Activated naive CD4-positive, alpha-beta T cell treated with anti-CD3 and anti-CD28 coated beads for 36 hours (primary cell): ENCODE measurements at regions of chr17 and their contacts with region 1.

Region 1: DNA sequence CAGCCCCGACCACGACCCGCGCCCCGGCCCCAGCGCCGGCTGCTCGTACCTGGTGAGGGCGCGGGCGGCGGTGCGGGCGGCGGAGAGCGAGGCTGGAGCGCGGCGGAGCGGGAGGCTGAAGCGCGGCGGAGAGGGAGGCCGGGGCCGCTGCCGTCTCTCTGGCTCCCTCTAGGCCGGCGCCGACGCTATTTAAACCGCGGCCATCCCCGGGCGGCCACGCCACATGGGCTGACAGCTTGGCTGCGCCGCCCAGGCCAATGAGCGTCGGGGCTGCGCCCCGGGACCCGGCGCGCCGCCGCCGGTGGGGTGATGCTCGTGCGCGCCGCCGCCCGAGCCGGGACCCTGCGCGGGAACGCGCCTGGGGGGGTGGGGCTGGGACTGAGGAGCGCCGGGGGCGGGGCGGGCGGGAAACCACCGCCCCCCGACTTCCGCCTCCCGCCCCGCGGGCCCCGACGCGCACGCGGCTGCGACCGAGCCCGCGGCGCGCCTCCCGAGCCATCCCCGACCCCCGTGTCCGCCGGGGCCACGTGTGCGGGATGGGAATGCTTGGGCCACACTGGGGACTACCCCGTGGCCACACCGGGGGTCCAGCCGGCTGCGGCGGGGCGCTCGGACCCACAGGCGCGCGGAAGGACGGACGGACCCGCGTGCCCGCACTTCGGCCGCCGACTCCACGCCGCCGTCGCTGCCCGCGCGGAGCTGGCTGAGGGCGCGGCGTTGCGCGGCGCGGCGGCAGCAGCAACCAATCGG is at the start of gene FASN:
- DNase-seq: peak; percentile 94
- H3K4me3 Mint-ChIP-seq: peak within 1 kb of the TSS; percentile 75
- H3K27ac Mint-ChIP-seq: peak within 1 kb of the TSS; percentile 63
- H3K4me1 Mint-ChIP-seq: peaks cover 14% of the 10 kb centered on the region
- H3K27me3 Mint-ChIP-seq: no peaks in the 10 kb centered on the region
- total RNA-seq, gene FASN: 183 to 195 TPM

Region 2: DNA sequence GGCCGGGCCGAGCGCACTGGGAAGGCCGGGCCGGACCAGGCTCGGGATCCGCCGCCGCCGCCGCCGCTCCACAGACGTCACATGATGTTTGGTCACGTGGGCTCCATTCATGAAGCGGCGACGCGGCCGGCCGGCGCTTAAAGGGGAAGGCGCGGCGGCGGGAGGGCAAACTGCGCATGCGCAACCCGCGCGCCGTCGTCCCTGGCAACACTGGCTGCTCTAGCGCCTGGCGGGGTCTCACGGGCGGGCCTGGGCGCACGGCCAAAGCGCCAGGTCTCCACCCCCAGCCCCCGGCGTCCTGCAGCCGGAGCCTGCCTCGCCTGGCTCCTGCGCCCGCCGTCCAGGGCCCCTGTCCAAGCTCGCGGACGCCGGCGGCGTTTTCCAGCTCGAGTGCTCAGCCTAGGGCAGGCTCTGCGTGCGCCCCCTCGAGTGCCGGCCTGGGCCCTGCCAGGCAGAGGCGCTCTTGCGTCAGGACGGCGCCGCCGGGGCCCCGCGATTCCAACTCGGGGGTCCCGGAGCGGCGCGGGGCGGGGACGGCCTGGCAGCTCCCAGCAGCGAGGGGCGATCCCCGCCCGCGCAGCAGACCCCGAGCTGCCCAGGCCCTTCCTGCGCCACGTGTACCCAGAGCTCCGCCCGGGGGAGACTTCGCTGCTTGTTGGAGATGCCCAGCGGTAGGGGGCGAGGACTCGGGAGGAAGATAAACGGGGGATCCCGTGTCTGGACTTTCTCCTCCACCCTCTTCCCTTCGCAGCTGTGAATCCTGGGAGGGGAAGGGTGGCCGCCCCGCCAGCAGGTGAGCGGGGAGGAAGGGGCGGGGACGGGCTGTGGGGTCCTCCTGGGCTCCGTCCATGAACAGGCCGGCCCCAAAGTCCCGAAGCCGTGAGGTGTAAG is 170.3 kb before region 1 on chr17 and contains the start of gene MAFG:
- CTCF ChIA-PET with region 1: no interaction called
- intact Hi-C with region 1: loop called (anchors 2 kb)
- DNase-seq: peak; percentile 88
- H3K4me3 Mint-ChIP-seq: peak within 1 kb of the TSS; percentile 76
- H3K27ac Mint-ChIP-seq: peak within 1 kb of the TSS; percentile 86
- H3K4me1 Mint-ChIP-seq: peaks cover 26% of the 10 kb centered on the region
- H3K27me3 Mint-ChIP-seq: peaks cover 5% of the 10 kb centered on the region
- total RNA-seq, gene MAFG: 13.5 to 14.8 TPM

Region 3: GRCh38 chr17:82030470-82031302 is 67.6 kb before region 1 on chr17:
- CTCF ChIA-PET with region 1: interaction called, 4 read pairs
- intact Hi-C with region 1: loop called (anchors 1 kb)
- DNase-seq: peak; percentile 90
- H3K4me3 Mint-ChIP-seq: peak overlapping the region; percentile 76
- H3K27ac Mint-ChIP-seq: no peak overlapping the region
- H3K4me1 Mint-ChIP-seq: peaks cover 8% of the 10 kb centered on the region
- H3K27me3 Mint-ChIP-seq: no peaks in the 10 kb centered on the region

Region 4: DNA sequence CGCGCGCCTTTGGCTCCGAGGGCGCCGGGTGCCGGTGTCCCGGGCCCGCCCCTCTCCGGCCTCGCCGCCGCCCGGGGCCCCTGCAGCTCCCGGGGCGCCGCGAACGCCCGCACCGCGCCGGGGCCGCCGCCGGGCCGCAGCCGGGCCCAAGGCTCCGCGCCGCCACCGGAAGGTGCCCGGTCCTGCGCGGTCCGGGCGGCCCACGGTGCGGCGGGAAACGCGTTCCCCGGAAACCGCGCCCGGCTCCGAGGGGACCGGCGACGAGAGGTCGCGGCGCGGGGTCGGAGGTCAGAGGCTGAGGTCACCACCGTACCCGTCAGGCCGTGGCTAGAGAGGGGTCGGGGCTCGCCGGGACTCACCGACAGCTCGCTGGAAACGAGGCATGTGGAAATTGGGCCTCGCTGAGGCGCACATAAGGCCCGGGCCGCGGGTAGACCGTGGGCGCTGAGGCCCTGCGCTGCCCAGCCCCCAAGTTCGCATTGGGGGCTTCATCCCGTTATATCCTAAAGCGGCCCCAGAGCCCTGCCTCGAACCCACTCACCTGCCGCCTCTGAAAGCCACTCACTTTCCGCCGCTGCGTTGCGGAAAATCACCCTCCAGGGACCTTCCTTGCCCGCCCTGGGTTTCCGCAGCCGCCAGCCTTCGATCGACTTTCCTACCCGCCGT is 32.5 kb before region 1 on chr17 and contains the start of gene DUS1L:
- CTCF ChIA-PET with region 1: no interaction called
- intact Hi-C with region 1: loop called (anchors 2 kb)
- DNase-seq: peak; percentile 74
- H3K4me3 Mint-ChIP-seq: peak within 1 kb of the TSS; percentile 87
- H3K27ac Mint-ChIP-seq: peak within 1 kb of the TSS; percentile 90
- H3K4me1 Mint-ChIP-seq: peaks cover 14% of the 10 kb centered on the region
- H3K27me3 Mint-ChIP-seq: no peaks in the 10 kb centered on the region
- total RNA-seq, gene DUS1L: 132 to 133 TPM

Region 5: DNA sequence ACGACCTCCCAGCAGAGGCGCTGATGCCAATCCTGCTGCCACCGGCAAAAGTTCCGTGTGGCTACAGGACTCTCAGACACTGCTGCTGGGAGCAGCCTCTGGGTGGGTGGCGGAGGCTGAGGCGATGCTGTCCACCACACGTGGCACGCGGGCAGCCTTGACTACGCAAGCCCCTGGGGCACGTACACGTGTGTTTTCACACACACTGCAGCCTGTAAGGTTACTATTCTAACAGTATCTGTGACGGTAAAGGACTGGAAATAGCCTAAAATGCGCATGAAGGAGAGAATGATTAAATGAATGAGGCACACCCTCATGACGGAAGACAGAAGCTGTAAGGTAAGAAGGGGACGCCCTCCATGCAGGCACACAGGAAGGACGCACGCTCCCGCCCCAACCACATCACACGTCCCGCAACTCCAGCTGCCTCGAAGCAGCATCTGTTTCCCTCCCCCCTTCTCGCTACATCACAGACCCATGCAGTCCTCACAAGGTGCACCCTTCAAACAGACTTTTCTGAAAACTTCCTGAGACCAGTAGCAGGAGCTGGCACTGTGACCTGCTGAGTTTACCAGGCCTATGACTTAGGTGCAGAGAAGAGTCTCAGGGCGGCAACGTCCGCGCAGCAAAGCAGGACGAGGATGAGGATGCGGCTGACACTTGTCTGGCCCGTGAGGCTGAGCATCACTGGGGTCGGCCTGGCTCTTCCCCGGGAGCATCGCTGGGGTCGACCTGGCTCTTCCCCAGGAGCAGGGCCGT is 28.5 kb after region 1 on chr17:
- CTCF ChIA-PET with region 1: interaction called, 4 read pairs
- intact Hi-C with region 1: loop called (anchors 1 kb)
- DNase-seq: peak; percentile 95
- H3K4me3 Mint-ChIP-seq: peak overlapping the region; percentile 71
- H3K27ac Mint-ChIP-seq: peak overlapping the region; percentile 95
- H3K4me1 Mint-ChIP-seq: peaks cover 65% of the 10 kb centered on the region
- H3K27me3 Mint-ChIP-seq: no peaks in the 10 kb centered on the region

Region 6: GRCh38 chr17:82205719-82206508 is 107.7 kb after region 1 on chr17:
- CTCF ChIA-PET with region 1: no interaction called
- intact Hi-C with region 1: loop called (anchors 2 kb)
- DNase-seq: peak; percentile 89
- H3K4me3 Mint-ChIP-seq: peak overlapping the region; percentile 70
- H3K27ac Mint-ChIP-seq: peak overlapping the region; percentile 93
- H3K4me1 Mint-ChIP-seq: peaks cover 50% of the 10 kb centered on the region
- H3K27me3 Mint-ChIP-seq: no peaks in the 10 kb centered on the region